Activated CD8-positive, alpha-beta T cell treated with anti-CD3 and anti-CD28 coated beads, Interleukin-2, amount 10 ng/mL, durations not matched to agents 7 days and 5 days (primary cell): ENCODE measurements at regions of chr2 and their contacts with region 1.

Region 1: DNA sequence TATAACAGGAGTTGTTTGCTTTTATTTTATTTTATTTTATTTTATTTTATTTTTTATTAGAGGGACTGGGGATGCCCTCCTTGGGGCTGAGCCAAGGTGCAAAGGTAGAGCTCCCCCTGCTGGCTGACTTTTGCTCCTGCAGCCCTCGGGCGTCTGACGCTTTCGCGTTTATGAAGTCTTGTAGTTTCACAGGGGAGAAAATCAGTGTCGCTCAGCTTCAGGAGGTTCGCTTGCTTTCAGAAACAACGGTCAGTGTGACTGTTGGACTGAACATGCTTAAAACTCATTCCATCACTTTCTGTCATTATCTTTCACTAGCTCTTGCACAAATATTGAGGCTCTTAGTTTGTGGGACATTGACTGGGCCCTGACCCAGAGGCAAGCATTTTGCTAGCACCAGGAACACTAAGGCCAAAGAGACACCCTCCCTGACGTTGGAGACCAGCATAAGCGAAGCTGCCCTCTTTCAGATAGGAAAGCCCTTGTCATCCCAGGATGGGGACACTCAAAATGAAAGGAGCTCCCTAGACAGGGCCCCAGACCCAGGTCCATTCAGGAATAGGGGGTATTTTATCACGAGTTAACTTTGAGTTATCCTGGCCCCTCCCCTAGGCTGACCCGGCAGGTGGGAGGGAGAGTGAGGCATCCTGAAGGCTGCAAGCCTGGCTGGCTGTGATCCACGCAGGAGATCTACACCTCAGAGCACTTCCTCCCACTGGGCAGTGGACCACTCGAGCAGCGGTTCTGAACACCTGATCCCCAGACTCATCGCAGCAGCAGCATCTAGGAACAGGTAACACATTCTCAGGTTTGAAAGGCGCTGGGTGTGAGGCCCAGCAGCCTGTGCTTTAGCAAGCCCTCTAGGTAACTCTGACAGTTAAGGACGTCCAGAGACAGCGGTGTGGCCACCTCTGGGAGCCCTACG is 34.4 kb downstream of the LGALSL start:
- DNase-seq: peak; percentile 86
- ATAC-seq: peak; percentile 78
- H3K4me3 Mint-ChIP-seq: no peak overlapping the region
- H3K27ac Mint-ChIP-seq: no peak overlapping the region
- H3K4me1 Mint-ChIP-seq: peaks cover 23% of the 10 kb centered on the region
- H3K27me3 Mint-ChIP-seq: peaks cover 26% of the 10 kb centered on the region

Region 2: GRCh38 chr2:64052468-64053241 is 435.7 kb before region 1 on chr2:
- CTCF ChIA-PET with region 1: interaction called, 19 read pairs
- POLR2A ChIA-PET with region 1: no interaction called
- DNase-seq: peak; percentile 35
- ATAC-seq: peak; percentile 35
- H3K4me3 Mint-ChIP-seq: no peak overlapping the region
- H3K27ac Mint-ChIP-seq: no peak overlapping the region
- H3K4me1 Mint-ChIP-seq: peaks cover 40% of the 10 kb centered on the region
- H3K27me3 Mint-ChIP-seq: no peaks in the 10 kb centered on the region

Region 3: GRCh38 chr2:64414736-64415435 is 73.4 kb before region 1 on chr2:
- CTCF ChIA-PET with region 1: no interaction called
- POLR2A ChIA-PET with region 1: no interaction called
- DNase-seq: peak; percentile 9
- ATAC-seq: no peak
- H3K4me3 Mint-ChIP-seq: no peak overlapping the region
- H3K27ac Mint-ChIP-seq: no peak overlapping the region
- H3K4me1 Mint-ChIP-seq: no peaks in the 10 kb centered on the region
- H3K27me3 Mint-ChIP-seq: no peaks in the 10 kb centered on the region

Region 4: GRCh38 chr2:64453770-64454385 is 34.4 kb before region 1 on chr2 and contains the start of gene LGALSL:
- CTCF ChIA-PET with region 1: interaction called, 26 read pairs
- POLR2A ChIA-PET with region 1: no interaction called
- DNase-seq: peak; percentile 45
- ATAC-seq: peak; percentile 76
- H3K4me3 Mint-ChIP-seq: peak within 1 kb of the TSS; percentile 77
- H3K27ac Mint-ChIP-seq: peak within 1 kb of the TSS; percentile 16
- H3K4me1 Mint-ChIP-seq: peaks cover 12% of the 10 kb centered on the region
- H3K27me3 Mint-ChIP-seq: peaks cover 20% of the 10 kb centered on the region
- total RNA-seq, gene LGALSL: 0.73 to 1.1 TPM

Region 5: DNA sequence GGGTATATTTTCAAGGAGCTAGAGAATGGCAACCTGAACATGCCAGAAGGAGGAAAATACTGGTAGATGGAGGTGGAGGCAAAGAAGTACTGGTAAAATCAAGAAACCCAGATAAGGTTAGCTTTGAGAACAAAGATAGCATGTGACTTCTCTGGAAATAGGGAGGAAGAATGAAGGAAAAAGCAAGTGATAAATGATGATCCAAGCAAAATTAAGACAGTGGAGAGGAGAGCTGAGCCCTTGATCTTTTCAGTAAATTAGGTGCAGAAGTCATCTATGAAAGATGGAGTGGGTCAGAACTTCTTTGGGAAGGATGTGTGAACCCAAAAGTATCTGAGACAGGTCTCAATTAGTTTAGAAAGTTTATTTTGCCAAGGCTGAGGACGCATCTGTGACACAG is 10.1 kb after region 1 on chr2:
- CTCF ChIA-PET with region 1: interaction called, 34 read pairs
- POLR2A ChIA-PET with region 1: no interaction called
- DNase-seq: no peak
- ATAC-seq: no peak
- H3K4me3 Mint-ChIP-seq: no peak overlapping the region
- H3K27ac Mint-ChIP-seq: no peak overlapping the region
- H3K4me1 Mint-ChIP-seq: peaks cover 8% of the 10 kb centered on the region
- H3K27me3 Mint-ChIP-seq: peaks cover 29% of the 10 kb centered on the region

Region 6: GRCh38 chr2:64514008-64514407 is 25.7 kb after region 1 on chr2:
- CTCF ChIA-PET with region 1: interaction called, 11 read pairs
- POLR2A ChIA-PET with region 1: no interaction called
- DNase-seq: no peak
- ATAC-seq: no peak
- H3K4me3 Mint-ChIP-seq: no peak overlapping the region
- H3K27ac Mint-ChIP-seq: no peak overlapping the region
- H3K4me1 Mint-ChIP-seq: no peaks in the 10 kb centered on the region
- H3K27me3 Mint-ChIP-seq: peaks cover 15% of the 10 kb centered on the region

Region 7: GRCh38 chr2:64595397-64596160 is 107.3 kb after region 1 on chr2:
- CTCF ChIA-PET with region 1: no interaction called
- POLR2A ChIA-PET with region 1: no interaction called
- DNase-seq: no peak
- ATAC-seq: no peak
- H3K4me3 Mint-ChIP-seq: no peak overlapping the region
- H3K27ac Mint-ChIP-seq: no peak overlapping the region
- H3K4me1 Mint-ChIP-seq: peaks cover 8% of the 10 kb centered on the region
- H3K27me3 Mint-ChIP-seq: no peaks in the 10 kb centered on the region

Region 8: GRCh38 chr2:65107530-65107929 is 619.2 kb after region 1 on chr2:
- CTCF ChIA-PET with region 1: no interaction called
- POLR2A ChIA-PET with region 1: no interaction called
- DNase-seq: no peak
- ATAC-seq: no peak
- H3K4me3 Mint-ChIP-seq: no peak overlapping the region
- H3K27ac Mint-ChIP-seq: no peak overlapping the region
- H3K4me1 Mint-ChIP-seq: peaks cover 2% of the 10 kb centered on the region
- H3K27me3 Mint-ChIP-seq: no peaks in the 10 kb centered on the region